AG04449 (cell line): ENCODE measurements at regions of chr17 and their contacts with region 1.

Region 1: DNA sequence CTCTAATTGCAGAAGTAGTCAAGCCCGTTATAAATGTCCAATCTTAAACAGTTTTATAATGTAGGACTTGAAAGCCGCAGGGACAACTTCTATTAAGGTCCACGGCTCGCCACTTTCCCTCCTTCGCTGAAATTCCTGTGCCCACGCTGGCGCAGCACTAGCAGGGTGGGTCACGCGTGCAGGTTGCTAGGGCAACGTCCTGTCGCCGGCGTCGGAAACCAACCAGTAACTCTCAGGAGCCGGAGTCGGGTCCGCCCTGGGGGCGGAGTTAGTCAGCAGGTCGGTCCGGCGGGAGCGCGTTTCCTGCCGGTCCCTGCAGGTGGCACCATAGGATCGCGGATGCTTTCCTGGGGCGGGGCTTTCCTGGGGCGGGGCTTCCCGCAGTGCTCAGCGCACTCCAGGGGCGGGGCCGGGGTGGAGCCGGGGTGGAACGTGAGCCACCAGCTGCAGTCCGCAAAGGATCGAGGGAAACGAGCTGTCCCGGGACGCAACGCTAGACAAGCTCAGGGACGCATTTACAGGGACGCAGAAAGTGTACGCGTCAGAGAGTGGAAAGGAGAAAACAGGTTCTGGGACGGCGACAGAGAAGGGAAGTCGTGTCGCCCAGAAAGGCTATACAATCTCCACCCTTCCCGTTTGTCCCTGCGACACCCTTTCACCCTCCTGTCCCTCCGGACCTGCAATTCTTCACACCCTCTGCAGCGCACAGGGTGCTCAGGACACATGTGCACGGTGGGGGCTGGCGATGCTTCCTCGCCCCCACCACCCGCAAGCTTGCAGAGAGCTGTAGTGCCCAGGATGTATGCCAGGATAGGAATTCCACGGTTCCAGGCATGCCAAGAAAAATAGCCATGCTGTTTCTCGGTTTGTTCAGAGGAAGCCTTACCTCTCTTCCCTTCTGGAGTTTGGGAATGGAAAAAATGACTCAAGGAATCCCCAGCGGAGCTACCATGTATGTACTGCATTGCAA is 12.4 kb downstream of the COPZ2 start:
- DNase-seq: peak; percentile 79
- H3K4me3 ChIP-seq: peak overlapping the region; percentile 71
- CTCF ChIP-seq: peak; percentile 82

Region 2: GRCh38 chr17:47862621-47863440 is 162.4 kb before region 1 on chr17:
- CTCF ChIA-PET with region 1: no interaction called
- POLR2A ChIA-PET with region 1: no interaction called
- DNase-seq: peak; percentile 50
- H3K4me3 ChIP-seq: no peak overlapping the region
- CTCF ChIP-seq: no peak

Region 3: GRCh38 chr17:47970704-47971463 is 54.3 kb before region 1 on chr17 and contains the start of gene CDK5RAP3:
- CTCF ChIA-PET with region 1: interaction called, 600 read pairs
- POLR2A ChIA-PET with region 1: interaction called, 3 read pairs
- DNase-seq: peak; percentile 89
- H3K4me3 ChIP-seq: peak within 1 kb of the TSS; percentile 98
- CTCF ChIP-seq: peak; percentile 100

Region 4: GRCh38 chr17:48037036-48037837 is 12.0 kb after region 1 on chr17 and contains the start of gene COPZ2:
- CTCF ChIA-PET with region 1: interaction called, 83 read pairs
- POLR2A ChIA-PET with region 1: interaction called, 21 read pairs
- DNase-seq: no peak
- H3K4me3 ChIP-seq: peak within 1 kb of the TSS; percentile 76
- CTCF ChIP-seq: peak; percentile 81

Region 5: DNA sequence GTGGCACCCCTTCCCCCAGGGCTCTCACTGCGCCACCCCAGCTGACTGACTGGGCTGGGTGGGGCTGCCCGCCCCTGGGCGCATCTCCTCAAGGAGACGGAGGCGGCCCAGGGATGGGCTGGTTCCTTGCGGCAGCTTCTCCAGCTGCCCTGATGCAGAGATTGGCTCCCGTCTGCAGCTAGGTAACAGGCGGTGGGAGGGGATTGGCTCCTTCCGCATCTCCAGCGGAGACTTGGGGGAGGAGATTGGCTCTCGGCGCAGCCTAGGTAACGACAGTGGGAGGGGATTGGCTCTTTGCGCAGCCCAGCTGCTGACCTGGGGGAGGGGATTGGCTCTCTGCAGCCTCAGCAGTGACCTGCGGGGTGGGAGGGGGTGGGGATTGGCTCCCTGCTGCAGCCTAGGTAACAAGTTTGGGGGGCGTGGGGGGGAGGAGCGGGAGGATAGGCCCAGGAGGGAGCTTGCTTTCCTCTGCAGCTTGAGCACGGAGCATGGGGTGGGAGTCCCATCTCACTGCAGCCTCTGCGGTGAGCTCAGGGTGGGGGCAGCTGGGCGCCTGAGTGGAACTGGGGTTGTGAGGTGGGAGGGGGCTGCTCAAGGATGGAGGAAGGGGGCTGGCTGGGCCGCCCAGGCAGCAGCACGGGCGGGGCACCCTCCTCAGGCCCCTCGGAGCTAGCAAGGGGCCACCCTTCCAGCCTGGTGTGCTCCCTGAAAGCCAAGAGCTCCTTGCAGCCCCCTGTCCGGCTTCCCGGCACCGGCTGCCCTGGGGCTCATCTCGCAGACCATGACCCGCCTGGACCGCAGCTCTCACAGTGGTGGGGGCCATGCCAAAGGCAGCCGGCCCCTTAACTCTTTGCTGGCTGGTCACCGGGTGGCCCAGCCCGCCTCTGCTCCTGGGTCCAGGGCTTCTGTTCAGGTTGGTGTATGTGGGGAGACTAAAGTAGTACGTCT is 29.3 kb after region 1 on chr17:
- CTCF ChIA-PET with region 1: interaction called, 42 read pairs
- POLR2A ChIA-PET with region 1: interaction called, 36 read pairs
- DNase-seq: no peak
- H3K4me3 ChIP-seq: peak overlapping the region; percentile 15
- CTCF ChIP-seq: no peak

Region 6: GRCh38 chr17:48074315-48075081 is 49.3 kb after region 1 on chr17:
- CTCF ChIA-PET with region 1: interaction called, 305 read pairs
- POLR2A ChIA-PET with region 1: interaction called, 5 read pairs
- DNase-seq: peak; percentile 52
- H3K4me3 ChIP-seq: no peak overlapping the region
- CTCF ChIP-seq: peak; percentile 56

Region 7: DNA sequence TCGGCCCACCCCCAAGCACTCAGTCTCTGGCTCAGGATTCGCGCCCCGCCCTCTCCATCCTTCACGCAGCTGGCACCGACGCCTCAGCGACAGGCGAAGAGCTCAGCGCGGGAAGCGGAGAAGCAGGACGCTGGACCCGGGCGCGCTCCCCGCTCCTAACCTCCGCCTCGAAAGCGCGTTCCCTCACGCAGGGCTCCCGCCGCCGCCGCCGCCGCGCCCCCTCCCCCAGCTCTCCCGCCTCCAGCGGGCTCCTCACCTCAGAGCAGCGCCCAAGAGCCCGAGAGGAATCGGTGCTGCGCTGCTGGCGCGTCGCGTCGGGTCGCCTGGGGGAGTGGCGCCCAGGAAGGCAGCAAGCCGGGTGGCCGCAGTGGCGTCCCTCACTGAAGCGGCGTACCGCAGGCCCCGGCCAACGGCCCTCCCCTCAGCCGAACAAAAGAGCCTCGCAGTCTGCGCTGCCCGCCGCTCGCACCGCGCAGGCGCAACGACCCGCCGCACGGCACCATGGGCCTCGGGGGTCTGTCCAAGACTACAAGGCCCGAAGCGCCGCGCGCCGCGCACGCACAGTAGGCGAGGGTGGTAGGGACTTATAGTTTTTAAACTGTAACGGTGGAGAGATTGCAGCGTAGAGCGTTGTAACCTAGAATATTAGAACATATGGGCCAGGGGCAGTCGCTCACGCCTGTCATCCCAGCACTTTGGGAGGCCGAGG is 75.9 kb after region 1 on chr17 and contains the start of gene CBX1:
- CTCF ChIA-PET with region 1: interaction called, 68 read pairs
- POLR2A ChIA-PET with region 1: interaction called, 7 read pairs
- DNase-seq: peak; percentile 46
- H3K4me3 ChIP-seq: peak within 1 kb of the TSS; percentile 88
- CTCF ChIP-seq: no peak

Region 8: GRCh38 chr17:48131216-48131824 is 106.1 kb after region 1 on chr17:
- CTCF ChIA-PET with region 1: interaction called, 112 read pairs
- POLR2A ChIA-PET with region 1: interaction called, 7 read pairs
- DNase-seq: no peak
- H3K4me3 ChIP-seq: no peak overlapping the region
- CTCF ChIP-seq: peak; percentile 78